Posterior cingulate gyrus (tissue), 11 donors: ENCODE measurements at regions of chr7 and their contacts with region 1.

Region 1: DNA sequence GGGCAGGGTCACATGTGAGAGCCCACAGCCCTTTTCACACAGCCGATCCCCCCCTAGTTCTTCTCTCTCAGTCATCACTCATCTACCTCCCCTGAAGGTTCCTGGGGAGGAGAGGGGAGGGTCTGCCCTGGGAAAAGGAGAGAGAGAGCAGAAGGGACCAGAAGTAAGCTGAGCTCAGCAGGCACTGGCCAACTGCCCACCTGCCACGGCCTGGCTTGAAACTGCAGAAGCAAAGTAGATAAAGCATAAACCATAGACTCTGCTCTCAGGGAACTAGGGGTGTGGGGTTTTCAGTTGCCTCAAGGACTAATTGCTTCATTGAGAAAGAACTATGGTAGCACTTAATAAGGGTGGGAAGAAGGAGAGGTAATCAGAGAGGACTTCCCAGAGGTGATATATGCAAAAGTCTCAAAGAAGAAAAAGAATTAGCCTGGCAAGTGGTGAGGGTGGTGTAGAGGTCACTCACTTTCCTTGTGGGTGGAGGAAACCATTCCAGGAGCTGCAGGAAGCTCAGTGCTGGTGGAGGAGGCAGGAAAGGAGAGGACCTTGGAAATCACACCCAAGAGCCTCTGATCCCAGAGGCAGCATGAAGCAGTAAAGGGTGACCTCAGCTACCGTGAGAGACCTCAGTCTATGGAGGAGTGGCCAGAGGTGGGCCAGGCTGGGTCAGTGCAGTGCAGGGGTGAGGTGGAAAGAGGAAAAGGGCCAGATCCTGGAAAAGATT is 17.2 kb downstream of the PILRA start:
- DNase-seq: no peak

Region 2: GRCh38 chr7:100400656-100401055 is 10.2 kb after region 1 on chr7:
- intact Hi-C with region 1: loop called (anchors 1 kb)
- DNase-seq: no peak

Region 3: GRCh38 chr7:100465702-100466311 is 75.4 kb after region 1 on chr7:
- intact Hi-C with region 1: no loop called
- DNase-seq: peak; percentile 77 to 99 (median 86)

Region 4: GRCh38 chr7:100856871-100857282 is 466.4 kb after region 1 on chr7:
- intact Hi-C with region 1: no loop called
- DNase-seq: peak in 2 of 10 donors; percentile 59 to 79